Activated naive CD4-positive, alpha-beta T cell treated with anti-CD3 and anti-CD28 coated beads for 36 hours (primary cell): ENCODE measurements at regions of chr12 and their contacts with region 1.

Region 1: DNA sequence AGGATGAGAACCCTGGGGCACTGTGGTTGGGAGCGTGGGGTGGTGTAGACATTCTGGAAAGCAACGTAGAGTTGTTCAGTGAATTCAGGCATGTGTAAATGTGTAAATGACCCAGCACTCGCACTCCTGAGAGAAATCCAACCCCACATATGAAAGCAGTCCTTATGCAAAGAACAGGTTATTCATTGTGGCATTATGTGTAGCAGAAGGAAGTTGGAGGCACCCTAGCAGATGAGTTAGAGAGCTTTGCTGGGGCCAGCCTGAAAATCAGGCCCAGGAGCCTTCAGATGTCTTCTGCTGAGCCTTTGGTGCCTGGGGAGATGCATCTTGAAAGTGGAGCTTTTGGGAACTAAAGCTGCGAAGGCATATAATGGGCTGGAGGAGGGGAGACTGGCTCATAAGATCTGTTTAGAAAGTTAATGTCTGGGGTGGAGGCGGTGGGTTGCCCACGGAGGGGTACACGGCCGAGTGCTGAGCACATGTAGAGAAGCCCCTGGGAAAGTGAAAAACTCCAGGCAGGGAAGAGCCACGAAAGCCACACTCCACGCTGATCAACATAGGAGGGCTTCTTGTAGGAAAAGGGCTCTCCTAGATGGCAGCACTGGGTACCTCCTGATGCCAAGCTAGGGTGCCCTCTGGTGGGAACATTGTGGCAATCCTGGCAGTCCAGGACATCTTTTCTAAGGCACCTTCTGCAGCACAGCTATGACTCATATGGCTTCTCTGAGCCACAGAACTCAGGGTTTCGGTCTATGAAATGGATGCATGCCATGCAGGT is 6.0 kb upstream of the KRT83 start:
- DNase-seq: peak; percentile 90
- H3K4me3 Mint-ChIP-seq: no peak overlapping the region
- H3K27ac Mint-ChIP-seq: no peak overlapping the region
- H3K4me1 Mint-ChIP-seq: peaks cover 13% of the 10 kb centered on the region
- H3K27me3 Mint-ChIP-seq: peaks cover 5% of the 10 kb centered on the region

Region 2: GRCh38 chr12:52023182-52023975 is 303.9 kb before region 1 on chr12:
- CTCF ChIA-PET with region 1: no interaction called
- intact Hi-C with region 1: no loop called
- DNase-seq: peak; percentile 94
- H3K4me3 Mint-ChIP-seq: peak overlapping the region; percentile 89
- H3K27ac Mint-ChIP-seq: peak overlapping the region; percentile 97
- H3K4me1 Mint-ChIP-seq: peaks cover 39% of the 10 kb centered on the region
- H3K27me3 Mint-ChIP-seq: no peaks in the 10 kb centered on the region

Region 3: DNA sequence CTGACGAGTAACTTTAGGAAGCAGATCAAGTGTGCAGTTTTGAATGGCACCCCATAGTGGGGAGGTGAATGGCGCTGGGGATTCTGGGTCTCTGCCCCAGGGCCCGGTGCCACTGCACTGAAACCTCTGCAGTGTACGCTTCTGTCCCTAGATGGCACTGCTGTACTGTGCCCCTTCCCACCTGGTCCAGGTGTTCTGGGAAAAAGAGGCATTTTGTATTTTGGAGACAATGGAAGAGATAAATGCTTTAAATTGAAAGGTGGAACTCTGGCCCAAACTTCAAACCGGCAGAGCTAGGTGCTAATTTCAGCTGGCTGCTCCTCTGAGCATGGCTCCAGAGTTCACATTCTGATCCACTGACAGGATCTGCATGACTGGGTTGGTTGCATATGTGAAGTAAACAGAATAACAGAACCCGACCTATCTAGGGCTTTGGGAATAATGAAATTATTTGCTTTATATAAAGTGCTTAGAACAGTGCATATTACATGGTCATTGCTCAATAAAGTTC is 187.6 kb before region 1 on chr12:
- CTCF ChIA-PET with region 1: interaction called, 11 read pairs
- intact Hi-C with region 1: no loop called
- DNase-seq: peak; percentile 60
- H3K4me3 Mint-ChIP-seq: no peak overlapping the region
- H3K27ac Mint-ChIP-seq: no peak overlapping the region
- H3K4me1 Mint-ChIP-seq: no peaks in the 10 kb centered on the region
- H3K27me3 Mint-ChIP-seq: no peaks in the 10 kb centered on the region

Region 4: GRCh38 chr12:52156736-52157565 is 170.3 kb before region 1 on chr12:
- CTCF ChIA-PET with region 1: interaction called, 31 read pairs
- intact Hi-C with region 1: loop called (anchors 1 kb)
- DNase-seq: peak; percentile 83
- H3K4me3 Mint-ChIP-seq: no peak overlapping the region
- H3K27ac Mint-ChIP-seq: no peak overlapping the region
- H3K4me1 Mint-ChIP-seq: peaks cover 26% of the 10 kb centered on the region
- H3K27me3 Mint-ChIP-seq: no peaks in the 10 kb centered on the region

Region 5: GRCh38 chr12:52221912-52222457 is 105.3 kb before region 1 on chr12:
- CTCF ChIA-PET with region 1: interaction called, 6 read pairs
- intact Hi-C with region 1: loop called (anchors 1 kb)
- DNase-seq: peak; percentile 96
- H3K4me3 Mint-ChIP-seq: no peak overlapping the region
- H3K27ac Mint-ChIP-seq: peak overlapping the region; percentile 14
- H3K4me1 Mint-ChIP-seq: peaks cover 22% of the 10 kb centered on the region
- H3K27me3 Mint-ChIP-seq: peaks cover 25% of the 10 kb centered on the region

Region 6: DNA sequence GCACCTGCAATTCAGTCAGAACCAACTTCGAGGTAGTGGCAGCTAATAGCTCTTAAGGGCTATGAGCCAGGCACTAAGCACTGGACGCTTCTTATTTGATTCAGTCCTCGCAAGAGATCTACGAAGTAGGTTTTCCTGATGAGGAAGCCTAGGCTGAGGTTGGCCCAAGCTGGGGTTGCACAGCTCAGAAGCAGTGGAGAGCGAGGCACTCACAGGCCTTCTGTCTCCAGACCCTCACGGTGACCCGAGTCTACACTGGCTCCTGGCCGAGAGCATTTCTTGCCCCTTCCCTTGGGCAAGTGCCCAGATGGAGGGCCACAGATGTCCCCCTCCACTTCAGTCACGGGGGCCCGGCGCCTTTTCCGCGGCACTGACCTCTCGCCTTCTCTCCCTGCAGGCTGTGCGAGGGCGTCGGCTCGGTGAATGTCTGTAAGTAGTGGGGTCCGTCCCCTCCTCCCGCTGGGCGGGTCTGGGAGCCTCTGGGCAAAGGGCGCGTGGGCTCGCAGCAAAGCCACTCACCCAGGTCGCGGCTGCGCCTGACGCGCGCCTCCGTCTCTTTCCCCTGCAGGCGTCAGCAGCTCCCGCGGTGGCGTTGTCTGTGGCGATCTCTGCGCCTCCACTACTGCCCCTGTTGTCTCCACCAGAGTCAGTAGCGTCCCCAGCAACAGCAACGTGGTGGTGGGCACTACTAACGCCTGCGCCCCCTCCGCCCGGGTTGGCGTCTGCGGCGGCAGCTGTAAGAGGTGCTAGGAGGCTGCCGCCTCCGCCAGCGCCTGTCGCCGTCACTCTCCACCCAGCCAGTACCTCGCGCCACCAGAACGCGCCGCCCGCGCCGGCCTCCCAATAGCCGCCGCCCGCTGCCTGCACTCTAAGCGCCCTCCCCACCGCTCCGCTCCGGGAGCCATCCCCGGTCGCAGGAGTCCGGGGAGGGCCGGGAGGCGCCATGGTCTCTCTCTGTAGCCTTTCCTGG is 19.1 kb before region 1 on chr12:
- CTCF ChIA-PET with region 1: interaction called, 37 read pairs
- intact Hi-C with region 1: no loop called
- DNase-seq: peak; percentile 59
- H3K4me3 Mint-ChIP-seq: peak overlapping the region; percentile 44
- H3K27ac Mint-ChIP-seq: no peak overlapping the region
- H3K4me1 Mint-ChIP-seq: peaks cover 14% of the 10 kb centered on the region
- H3K27me3 Mint-ChIP-seq: peaks cover 37% of the 10 kb centered on the region

Region 7: GRCh38 chr12:52372216-52373154 is 45.2 kb after region 1 on chr12:
- CTCF ChIA-PET with region 1: interaction called, 10 read pairs
- intact Hi-C with region 1: no loop called
- DNase-seq: peak; percentile 77
- H3K4me3 Mint-ChIP-seq: no peak overlapping the region
- H3K27ac Mint-ChIP-seq: no peak overlapping the region
- H3K4me1 Mint-ChIP-seq: no peaks in the 10 kb centered on the region
- H3K27me3 Mint-ChIP-seq: no peaks in the 10 kb centered on the region

Region 8: GRCh38 chr12:53770281-53770680 is 1443.0 kb after region 1 on chr12:
- CTCF ChIA-PET with region 1: no interaction called
- intact Hi-C with region 1: no loop called
- DNase-seq: no peak
- H3K4me3 Mint-ChIP-seq: no peak overlapping the region
- H3K27ac Mint-ChIP-seq: no peak overlapping the region
- H3K4me1 Mint-ChIP-seq: no peaks in the 10 kb centered on the region
- H3K27me3 Mint-ChIP-seq: peaks cover 35% of the 10 kb centered on the region